ACHN (cell line): ENCODE measurements at regions of chr9 and their contacts with region 1.

Region 1: DNA sequence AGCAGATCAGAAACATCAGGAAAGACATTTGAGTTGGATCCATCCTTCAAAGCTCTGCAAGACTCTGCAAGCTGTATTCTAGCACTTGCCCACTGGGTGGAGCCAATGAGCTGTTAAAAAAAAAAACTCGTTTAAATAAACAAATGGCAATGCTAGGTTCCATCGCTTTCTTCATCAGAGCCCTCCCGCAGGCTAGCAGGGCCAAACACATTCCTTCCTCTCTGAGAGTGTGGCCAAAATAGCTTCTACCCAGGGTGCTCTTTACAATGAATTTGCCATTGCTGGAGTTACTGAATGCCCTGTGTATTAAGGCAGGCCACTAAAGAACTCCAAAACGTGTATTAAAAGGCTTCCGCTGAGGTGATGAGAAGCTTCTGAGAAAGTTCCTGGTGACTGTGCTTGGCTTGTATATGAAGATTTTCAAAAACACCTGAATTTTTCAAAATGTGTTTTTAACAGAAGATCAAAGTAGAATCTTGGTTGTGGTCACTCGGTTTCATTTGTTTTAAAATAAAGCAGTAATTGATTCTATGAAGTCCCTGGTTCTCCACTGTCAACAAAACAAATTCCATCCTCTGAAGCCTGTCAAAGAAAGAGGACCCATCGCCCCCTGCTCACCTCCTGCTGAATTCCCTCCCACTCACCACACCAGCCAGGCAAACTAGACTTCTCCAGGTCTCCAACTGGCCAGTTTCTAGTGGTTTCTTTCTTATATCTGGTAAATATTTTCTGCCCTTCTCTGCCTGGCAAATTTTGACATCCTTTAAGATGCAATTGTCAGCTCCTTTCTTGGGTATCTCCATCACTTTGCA is 36.5 kb upstream of the EQTN start:
- DNase-seq: peak; percentile 59

Region 2: GRCh38 chr9:27529316-27530278 is 196.2 kb after region 1 on chr9 and contains the start of gene MOB3B:
- in situ Hi-C with region 1: loop called (anchors 25 kb)
- DNase-seq: peak; percentile 53